Posterior vena cava (tissue), 2 donors: ENCODE measurements at regions of chr6 and their contacts with region 1.

Region 1: GRCh38 chr6:135535989-135536414 is 38.5 kb upstream of the AHI1 start:
- DNase-seq: no peak

Region 2: DNA sequence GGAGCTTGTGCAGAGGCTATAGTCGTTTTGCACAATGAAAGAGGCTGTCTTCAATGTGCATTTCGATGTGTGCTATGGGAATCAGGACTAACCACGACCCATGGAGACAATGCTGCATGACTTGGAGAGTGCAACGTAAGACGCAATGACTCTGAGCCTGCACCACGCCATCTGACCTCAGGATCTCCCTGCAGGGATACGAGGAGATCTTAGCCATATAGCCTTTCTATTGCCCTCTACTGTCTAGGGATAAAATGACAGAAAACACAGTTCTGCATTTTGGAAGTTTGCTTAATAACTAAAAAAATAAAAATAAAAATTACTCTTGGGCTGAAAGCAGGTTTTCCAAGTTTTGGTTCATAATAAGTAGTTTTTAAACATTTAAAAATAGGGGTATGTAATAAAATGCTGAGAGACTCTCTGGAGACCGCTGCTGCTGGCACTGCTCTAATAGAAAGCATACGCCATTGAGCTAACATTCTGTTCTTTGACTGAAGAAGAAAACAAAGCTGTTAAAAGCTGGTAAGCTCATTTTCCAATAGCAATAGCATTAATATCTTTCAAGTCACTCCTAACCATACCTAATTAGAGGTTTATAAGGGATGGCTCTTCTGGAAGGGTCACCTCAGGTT is 402.7 kb after region 1 on chr6:
- intact Hi-C with region 1: loop called in 1 of 2 experiments (anchors 10 kb)
- DNase-seq: no peak

Region 3: DNA sequence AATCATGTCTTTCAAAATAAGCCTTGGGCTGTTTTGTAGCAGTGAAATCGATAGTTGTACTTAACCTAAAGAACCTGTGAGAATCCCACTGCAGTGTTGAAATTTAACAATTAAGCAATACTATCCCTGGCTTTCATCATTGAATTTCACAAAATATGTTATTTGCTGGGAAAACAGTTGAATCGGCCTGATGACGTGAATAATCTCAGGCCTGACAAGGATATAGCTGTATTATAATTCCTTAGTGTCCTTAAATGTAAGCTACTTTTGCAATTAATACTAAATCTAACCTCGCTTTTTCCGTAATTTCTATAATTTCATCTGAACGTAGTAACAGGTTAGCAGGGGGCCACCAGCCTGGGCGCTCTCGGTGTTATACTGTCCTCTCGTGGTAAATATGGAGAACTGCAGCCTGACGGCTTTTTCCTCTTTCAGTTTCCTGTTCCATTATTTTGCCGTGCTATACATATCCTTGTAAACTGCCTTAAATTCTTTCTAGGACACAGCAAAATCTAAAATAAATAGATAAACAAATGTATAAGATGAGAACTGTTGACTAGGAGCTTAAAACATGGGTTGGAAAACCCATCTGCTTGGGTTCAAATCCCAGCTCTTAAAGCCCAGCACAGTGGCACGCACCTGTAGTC is 690.1 kb after region 1 on chr6:
- intact Hi-C with region 1: loop called (anchors 5 to 10 kb)
- DNase-seq: no peak